ENCODE measurements at regions of chr1 and their contacts with region 1.

Region 1: GRCh38 chr1:20212685-20213331 is 26.5 kb upstream of the PLA2G2C start:
- DNase-seq: peak; percentile 73
- CTCF ChIP-seq: peak; percentile 47

Region 2: DNA sequence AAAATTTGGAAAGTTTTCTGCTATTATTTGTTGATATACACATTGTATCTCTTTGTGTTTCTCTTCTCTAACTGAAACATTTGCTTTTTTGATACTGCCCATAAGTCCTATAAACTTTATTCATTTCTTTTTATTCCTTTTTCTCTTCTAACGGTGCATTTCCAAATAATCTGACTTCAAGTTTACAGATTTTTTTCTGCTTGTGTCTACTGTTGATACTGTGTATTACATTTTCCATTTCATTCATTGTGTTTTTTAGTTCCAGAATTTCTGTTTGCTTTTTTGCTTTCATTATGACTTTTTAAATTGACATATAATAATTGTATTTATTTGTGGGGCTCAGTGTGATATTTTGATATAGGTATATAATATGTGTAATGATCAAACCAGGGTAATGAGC is 195.1 kb before region 1 on chr1:
- CTCF ChIA-PET with region 1: no interaction called
- POLR2A ChIA-PET with region 1: no interaction called
- DNase-seq: no peak
- CTCF ChIP-seq: no peak

Region 3: DNA sequence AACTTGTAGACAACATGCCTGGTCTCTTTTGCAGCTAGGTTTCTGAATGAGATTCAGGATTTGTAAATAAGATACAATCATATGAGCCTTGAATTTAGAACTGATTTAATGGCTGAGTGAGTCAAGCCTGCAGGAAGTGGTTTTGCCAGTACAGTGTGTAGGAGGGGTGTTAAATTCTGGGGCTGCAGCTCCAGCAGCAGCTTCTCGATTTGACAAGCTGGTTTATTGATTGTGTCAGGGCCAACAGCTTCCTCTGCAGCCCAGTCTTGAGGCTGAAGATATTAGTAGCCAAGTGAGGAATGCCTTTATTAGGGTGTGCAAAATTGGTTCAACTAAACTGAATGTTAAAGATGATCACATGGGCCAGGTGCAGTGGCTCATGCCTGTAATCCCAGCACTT is 154.3 kb before region 1 on chr1:
- CTCF ChIA-PET with region 1: no interaction called
- POLR2A ChIA-PET with region 1: no interaction called
- DNase-seq: no peak
- CTCF ChIP-seq: no peak

Region 4: GRCh38 chr1:20200966-20201365 is 11.8 kb before region 1 on chr1:
- CTCF ChIA-PET with region 1: interaction called, 19 read pairs
- POLR2A ChIA-PET with region 1: no interaction called
- DNase-seq: no peak
- CTCF ChIP-seq: no peak

Region 5: DNA sequence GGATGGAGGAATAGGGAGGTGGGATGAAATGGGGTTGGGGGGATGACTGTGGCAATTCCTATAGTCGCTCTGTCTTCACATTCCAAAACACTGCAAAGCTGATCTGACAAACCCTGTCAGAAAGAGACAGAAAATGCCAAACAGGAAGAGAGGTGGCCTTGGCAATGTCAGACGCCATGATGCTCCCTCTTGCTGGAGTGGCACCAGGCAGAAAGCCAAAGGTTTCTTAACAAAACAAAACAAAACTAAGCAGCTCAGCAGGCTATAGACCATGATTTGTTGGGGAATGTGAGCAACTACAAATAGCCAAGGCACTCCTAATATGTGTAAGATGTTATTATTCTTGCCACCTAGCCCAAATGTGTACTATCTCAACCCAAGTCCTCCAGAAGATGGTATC is 16.4 kb after region 1 on chr1:
- CTCF ChIA-PET with region 1: interaction called, 11 read pairs
- POLR2A ChIA-PET with region 1: no interaction called
- DNase-seq: no peak
- CTCF ChIP-seq: no peak

Region 6: GRCh38 chr1:20430355-20431175 is 217.8 kb after region 1 on chr1:
- CTCF ChIA-PET with region 1: interaction called, 10 read pairs
- POLR2A ChIA-PET with region 1: no interaction called
- DNase-seq: peak; percentile 68
- CTCF ChIP-seq: peak; percentile 79